Activated CD8-positive, alpha-beta T cell treated with anti-CD3 and anti-CD28 coated beads for 36 hours (primary cell): ENCODE measurements at regions of chr7 and their contacts with region 1.

Region 1: DNA sequence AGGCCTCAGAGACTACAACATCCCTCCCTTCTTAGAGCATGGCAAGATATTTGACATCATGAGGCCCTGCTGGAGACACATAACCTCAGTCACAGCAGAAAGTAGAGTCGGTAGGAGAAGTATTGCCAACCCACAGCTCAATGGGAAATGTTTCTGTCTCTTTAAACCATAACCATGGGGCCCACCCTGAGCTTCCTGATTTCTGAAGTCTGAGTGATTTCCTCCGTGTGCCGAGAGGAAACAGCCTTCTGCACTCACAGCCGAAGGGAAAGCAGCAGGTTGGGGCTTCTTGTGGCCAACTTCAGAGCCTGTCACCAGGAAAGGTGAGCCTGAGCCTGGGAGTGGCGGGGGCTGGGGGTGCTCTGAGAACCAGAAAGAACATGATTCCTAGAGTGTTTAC is at the start of gene GIMAP1:
- DNase-seq: peak; percentile 69
- ATAC-seq: peak; percentile 60
- H3K4me3 Mint-ChIP-seq: peak within 1 kb of the TSS; percentile 78
- H3K27ac Mint-ChIP-seq: peak within 1 kb of the TSS; percentile 85
- H3K4me1 Mint-ChIP-seq: peaks cover 53% of the 10 kb centered on the region
- H3K27me3 Mint-ChIP-seq: no peaks in the 10 kb centered on the region
- CTCF ChIP-seq: no peak
- total RNA-seq, gene GIMAP1: 8.7 to 9.3 TPM

Region 2: GRCh38 chr7:150631866-150632864 is 84.2 kb before region 1 on chr7 and contains the start of gene GIMAP6:
- CTCF ChIA-PET with region 1: interaction called, 3 read pairs
- POLR2A ChIA-PET with region 1: interaction called, 10 read pairs
- intact Hi-C with region 1: no loop called
- DNase-seq: peak; percentile 61
- ATAC-seq: peak; percentile 71
- H3K4me3 Mint-ChIP-seq: peak within 1 kb of the TSS; percentile 99
- H3K27ac Mint-ChIP-seq: peak within 1 kb of the TSS; percentile 99
- H3K4me1 Mint-ChIP-seq: peaks cover 69% of the 10 kb centered on the region
- H3K27me3 Mint-ChIP-seq: no peaks in the 10 kb centered on the region
- CTCF ChIP-seq: no peak
- total RNA-seq, gene GIMAP6: 21.2 to 21.5 TPM

Region 3: GRCh38 chr7:150685219-150686029 is 30.9 kb before region 1 on chr7 and contains the start of gene GIMAP2:
- CTCF ChIA-PET with region 1: interaction called, 9 read pairs
- POLR2A ChIA-PET with region 1: interaction called, 21 read pairs
- intact Hi-C with region 1: loop called (anchors 5 kb)
- DNase-seq: peak; percentile 49
- ATAC-seq: peak; percentile 80
- H3K4me3 Mint-ChIP-seq: peak within 1 kb of the TSS; percentile 96
- H3K27ac Mint-ChIP-seq: peak within 1 kb of the TSS; percentile 100
- H3K4me1 Mint-ChIP-seq: peaks cover 75% of the 10 kb centered on the region
- H3K27me3 Mint-ChIP-seq: no peaks in the 10 kb centered on the region
- CTCF ChIP-seq: no peak
- total RNA-seq, gene GIMAP2: 42.2 to 42.7 TPM

Region 4: DNA sequence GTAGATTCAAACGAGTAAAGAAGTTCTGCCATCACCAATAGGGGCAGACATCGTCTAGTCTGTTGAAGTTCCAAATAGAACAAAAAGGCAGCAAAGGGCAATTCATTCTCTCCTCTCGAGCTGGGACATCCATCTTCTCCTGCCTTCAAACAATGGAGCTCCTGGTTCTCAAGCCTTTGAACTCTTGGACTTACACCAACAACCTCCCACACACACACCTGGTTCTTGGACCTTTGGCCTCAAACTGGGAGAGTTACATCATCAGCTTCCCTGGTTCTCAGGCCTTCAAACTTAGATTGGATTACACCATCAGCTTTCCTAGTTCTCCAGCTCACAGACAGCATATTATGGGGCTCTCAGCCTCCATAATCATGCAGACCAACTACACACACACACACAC is 11.0 kb after region 1 on chr7:
- CTCF ChIA-PET with region 1: interaction called, 42 read pairs
- POLR2A ChIA-PET with region 1: interaction called, 63 read pairs
- intact Hi-C with region 1: no loop called
- DNase-seq: no peak
- ATAC-seq: no peak
- H3K4me3 Mint-ChIP-seq: no peak overlapping the region
- H3K27ac Mint-ChIP-seq: peak overlapping the region; percentile 60
- H3K4me1 Mint-ChIP-seq: peaks cover 58% of the 10 kb centered on the region
- H3K27me3 Mint-ChIP-seq: no peaks in the 10 kb centered on the region
- CTCF ChIP-seq: no peak

Region 5: GRCh38 chr7:150753826-150754603 is 37.6 kb after region 1 on chr7:
- CTCF ChIA-PET with region 1: interaction called, 11 read pairs
- POLR2A ChIA-PET with region 1: interaction called, 7 read pairs
- intact Hi-C with region 1: loop called (anchors 2 kb)
- DNase-seq: peak; percentile 60
- ATAC-seq: peak; percentile 60
- H3K4me3 Mint-ChIP-seq: no peak overlapping the region
- H3K27ac Mint-ChIP-seq: peak overlapping the region; percentile 95
- H3K4me1 Mint-ChIP-seq: peaks cover 77% of the 10 kb centered on the region
- H3K27me3 Mint-ChIP-seq: no peaks in the 10 kb centered on the region
- CTCF ChIP-seq: no peak

Region 6: GRCh38 chr7:150766334-150766709 is 50.0 kb after region 1 on chr7:
- CTCF ChIA-PET with region 1: no interaction called
- POLR2A ChIA-PET with region 1: no interaction called
- intact Hi-C with region 1: no loop called
- DNase-seq: no peak
- ATAC-seq: no peak
- H3K4me3 Mint-ChIP-seq: no peak overlapping the region
- H3K27ac Mint-ChIP-seq: no peak overlapping the region
- H3K4me1 Mint-ChIP-seq: peaks cover 3% of the 10 kb centered on the region
- H3K27me3 Mint-ChIP-seq: no peaks in the 10 kb centered on the region
- CTCF ChIP-seq: no peak

Region 7: GRCh38 chr7:151085691-151086620 is 369.6 kb after region 1 on chr7 and contains the start of gene AGAP3:
- CTCF ChIA-PET with region 1: no interaction called
- POLR2A ChIA-PET with region 1: no interaction called
- intact Hi-C with region 1: no loop called
- DNase-seq: peak; percentile 50
- ATAC-seq: peak; percentile 6
- H3K4me3 Mint-ChIP-seq: peak within 1 kb of the TSS; percentile 80
- H3K27ac Mint-ChIP-seq: peak within 1 kb of the TSS; percentile 68
- H3K4me1 Mint-ChIP-seq: peaks cover 35% of the 10 kb centered on the region
- H3K27me3 Mint-ChIP-seq: peaks cover 22% of the 10 kb centered on the region
- CTCF ChIP-seq: no peak
- total RNA-seq, gene AGAP3: 20.6 to 22.0 TPM